CD8-positive, alpha-beta T cell (primary cell): ENCODE measurements at regions of chr19 and their contacts with region 1.

Region 1: GRCh38 chr19:39445265-39446111 is at the start of gene SUPT5H:
- DNase-seq: peak; percentile 94 to 100 (median 97)
- ATAC-seq: peak; percentile 93
- H3K4me3 ChIP-seq: peak within 1 kb of the TSS; percentile 85 to 95
- H3K4me3 Mint-ChIP-seq: peak within 1 kb of the TSS; percentile 93
- H3K27ac ChIP-seq: peak within 1 kb of the TSS; percentile 94 to 95
- H3K27ac Mint-ChIP-seq: peak within 1 kb of the TSS; percentile 99
- H3K4me1 ChIP-seq: peaks cover 42% of the 10 kb centered on the region
- H3K4me1 Mint-ChIP-seq: peaks cover 54% of the 10 kb centered on the region
- H3K27me3 ChIP-seq: no peaks in the 10 kb centered on the region
- H3K27me3 Mint-ChIP-seq: no peaks in the 10 kb centered on the region
- CTCF ChIP-seq: no peak
- total RNA-seq, gene SUPT5H: 303 to 329 TPM

Region 2: DNA sequence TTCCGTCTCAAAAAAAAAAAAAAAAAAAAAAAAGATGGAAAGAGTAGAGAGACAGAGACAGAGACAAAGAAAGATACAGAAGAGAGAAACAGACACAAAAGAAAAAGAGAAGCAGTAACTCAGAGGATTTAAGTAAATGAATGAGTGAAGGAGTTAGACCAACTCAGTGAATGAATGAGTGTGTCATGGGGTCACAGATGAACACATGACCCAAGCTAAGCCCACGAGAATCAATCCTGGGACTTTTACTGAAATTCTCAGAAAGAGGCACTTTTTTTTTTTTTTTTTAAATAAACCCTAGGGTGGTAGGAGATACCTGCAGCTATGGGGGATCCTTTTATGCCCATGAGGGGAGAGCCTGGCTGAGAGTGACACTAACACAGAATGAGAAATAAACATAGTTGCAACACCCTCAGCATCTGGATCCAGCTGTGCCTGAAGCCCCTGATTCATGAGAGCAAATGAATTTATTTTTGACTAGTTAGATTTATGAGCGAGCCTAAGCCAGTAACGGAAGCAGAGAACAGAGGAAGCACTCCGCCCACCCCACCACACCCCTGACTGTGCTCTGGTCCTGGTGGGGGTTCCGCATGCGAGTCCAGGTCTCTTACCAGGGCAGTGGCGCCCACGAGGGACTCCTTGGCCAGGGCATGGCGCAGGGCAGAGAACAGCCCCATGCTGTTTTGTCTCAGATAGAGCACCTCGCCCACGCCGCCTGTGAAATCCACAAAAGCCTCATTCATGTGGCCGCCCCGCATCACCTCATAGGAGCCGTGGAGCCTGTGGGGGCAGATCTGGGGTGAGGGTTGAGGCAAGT is 705.8 kb before region 1 on chr19:
- CTCF ChIA-PET with region 1: no interaction called
- POLR2A ChIA-PET with region 1: no interaction called
- intact Hi-C with region 1: no loop called
- DNase-seq: peak in 2 of 9 experiments; percentile 43 to 48
- ATAC-seq: no peak
- H3K4me3 ChIP-seq: no peak overlapping the region
- H3K4me3 Mint-ChIP-seq: no peak overlapping the region
- H3K27ac ChIP-seq: peak overlapping the region in 1 of 2 experiments; percentile 43
- H3K27ac Mint-ChIP-seq: no peak overlapping the region
- H3K4me1 ChIP-seq: peaks cover 34% of the 10 kb centered on the region
- H3K4me1 Mint-ChIP-seq: peaks cover 26% of the 10 kb centered on the region
- H3K27me3 ChIP-seq: no peaks in the 10 kb centered on the region
- H3K27me3 Mint-ChIP-seq: no peaks in the 10 kb centered on the region
- CTCF ChIP-seq: no peak

Region 3: DNA sequence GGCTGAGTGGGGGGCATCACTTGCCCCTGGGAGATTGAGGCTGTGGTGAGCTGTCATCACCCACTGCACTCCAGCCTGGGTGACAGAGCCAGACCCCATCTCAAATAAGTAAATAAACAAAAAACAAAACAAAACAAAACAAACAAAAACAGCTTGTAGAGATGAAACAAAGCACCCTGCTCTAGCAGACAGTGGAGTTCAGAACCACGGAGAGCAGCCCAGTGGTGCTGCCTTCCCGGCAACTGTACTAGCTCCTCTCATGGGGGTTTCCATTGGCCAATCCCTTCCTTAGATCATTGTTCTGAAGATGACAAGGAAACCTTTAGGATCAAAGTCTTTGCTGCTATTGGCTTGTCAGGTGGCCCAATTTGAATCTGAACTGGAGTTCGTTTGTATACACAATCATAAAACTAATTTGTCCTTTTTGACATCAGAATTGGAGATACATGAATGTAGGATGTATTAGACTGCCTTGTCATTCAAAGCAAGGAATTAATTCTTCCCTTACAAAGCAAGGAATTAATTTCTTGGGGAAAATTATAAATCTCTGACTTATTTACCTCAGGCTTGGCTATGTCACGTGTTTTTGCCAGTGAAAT is 221.7 kb before region 1 on chr19:
- CTCF ChIA-PET with region 1: no interaction called
- POLR2A ChIA-PET with region 1: no interaction called
- intact Hi-C with region 1: no loop called
- DNase-seq: peak in 2 of 9 experiments; percentile 21 to 32
- ATAC-seq: no peak
- H3K4me3 ChIP-seq: no peak overlapping the region
- H3K4me3 Mint-ChIP-seq: no peak overlapping the region
- H3K27ac ChIP-seq: no peak overlapping the region
- H3K27ac Mint-ChIP-seq: no peak overlapping the region
- H3K4me1 ChIP-seq: no peaks in the 10 kb centered on the region
- H3K4me1 Mint-ChIP-seq: peaks cover 3% of the 10 kb centered on the region
- H3K27me3 ChIP-seq: peaks cover 0 to 3% of the 10 kb centered on the region in 2 experiments
- H3K27me3 Mint-ChIP-seq: peaks cover 30% of the 10 kb centered on the region
- CTCF ChIP-seq: no peak

Region 4: GRCh38 chr19:39341719-39342604 is 103.5 kb before region 1 on chr19 and contains the start of gene SAMD4B:
- CTCF ChIA-PET with region 1: no interaction called
- POLR2A ChIA-PET with region 1: interaction called, 4 read pairs
- intact Hi-C with region 1: loop called (anchors 1 to 2 kb)
- DNase-seq: peak; percentile 98 to 100 (median 99)
- ATAC-seq: peak; percentile 90
- H3K4me3 ChIP-seq: peak within 1 kb of the TSS; percentile 93 to 97
- H3K4me3 Mint-ChIP-seq: peak within 1 kb of the TSS; percentile 100
- H3K27ac ChIP-seq: peak within 1 kb of the TSS; percentile 67 to 88
- H3K27ac Mint-ChIP-seq: peak within 1 kb of the TSS; percentile 98
- H3K4me1 ChIP-seq: peaks cover 29% of the 10 kb centered on the region
- H3K4me1 Mint-ChIP-seq: peaks cover 69% of the 10 kb centered on the region
- H3K27me3 ChIP-seq: no peaks in the 10 kb centered on the region
- H3K27me3 Mint-ChIP-seq: no peaks in the 10 kb centered on the region
- CTCF ChIP-seq: peak; percentile 73
- total RNA-seq, gene SAMD4B: 68.3 to 78.1 TPM

Region 5: DNA sequence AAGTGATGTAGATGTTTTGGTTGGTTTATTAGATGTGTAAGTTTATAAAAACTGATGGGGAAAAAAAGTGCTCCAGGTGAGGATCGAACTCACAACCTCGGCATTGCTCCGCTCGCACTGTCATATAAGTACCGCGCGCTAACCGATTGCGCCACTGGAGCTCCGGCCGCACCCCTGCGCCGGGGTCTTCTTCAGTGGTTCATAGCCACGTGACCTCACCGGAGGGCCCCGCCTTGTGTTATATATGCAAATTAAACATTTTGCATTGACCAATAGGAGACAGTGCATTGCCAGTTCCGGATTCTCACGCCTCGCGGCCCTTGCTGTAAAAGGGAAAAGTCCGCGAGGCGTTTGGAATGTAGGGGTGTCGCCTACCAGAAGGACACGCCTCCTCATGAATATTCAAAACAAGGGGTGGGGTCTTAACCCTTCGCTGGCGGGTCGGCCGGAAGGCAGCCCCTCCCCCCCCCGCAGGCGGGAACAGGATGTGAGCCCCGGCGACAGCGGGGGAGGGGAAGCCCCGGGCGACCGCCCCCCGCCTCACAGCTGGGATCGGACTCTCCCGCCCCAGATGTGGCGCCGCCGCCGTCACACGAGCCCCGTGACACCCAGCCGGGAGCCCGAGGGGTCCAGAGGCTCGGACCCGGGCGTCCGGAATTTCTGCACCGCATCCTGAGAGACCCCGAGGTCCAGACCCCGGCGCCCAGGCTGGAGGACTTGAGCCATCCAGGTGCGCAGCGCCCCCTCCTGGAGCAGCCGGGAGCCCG is 33.2 kb before region 1 on chr19 and contains the start of gene PLEKHG2:
- CTCF ChIA-PET with region 1: interaction called, 3 read pairs
- POLR2A ChIA-PET with region 1: interaction called, 9 read pairs
- intact Hi-C with region 1: loop called (anchors 1 kb)
- DNase-seq: peak; percentile 95 to 99 (median 97)
- ATAC-seq: peak; percentile 57
- H3K4me3 ChIP-seq: peak within 1 kb of the TSS; percentile 95
- H3K4me3 Mint-ChIP-seq: peak within 1 kb of the TSS; percentile 89
- H3K27ac ChIP-seq: peak within 1 kb of the TSS; percentile 94 to 100
- H3K27ac Mint-ChIP-seq: peak within 1 kb of the TSS; percentile 96
- H3K4me1 ChIP-seq: peaks cover 26% of the 10 kb centered on the region
- H3K4me1 Mint-ChIP-seq: peaks cover 33% of the 10 kb centered on the region
- H3K27me3 ChIP-seq: no peaks in the 10 kb centered on the region
- H3K27me3 Mint-ChIP-seq: no peaks in the 10 kb centered on the region
- CTCF ChIP-seq: peak; percentile 84
- total RNA-seq, gene PLEKHG2: 54.8 to 69.0 TPM

Region 6: DNA sequence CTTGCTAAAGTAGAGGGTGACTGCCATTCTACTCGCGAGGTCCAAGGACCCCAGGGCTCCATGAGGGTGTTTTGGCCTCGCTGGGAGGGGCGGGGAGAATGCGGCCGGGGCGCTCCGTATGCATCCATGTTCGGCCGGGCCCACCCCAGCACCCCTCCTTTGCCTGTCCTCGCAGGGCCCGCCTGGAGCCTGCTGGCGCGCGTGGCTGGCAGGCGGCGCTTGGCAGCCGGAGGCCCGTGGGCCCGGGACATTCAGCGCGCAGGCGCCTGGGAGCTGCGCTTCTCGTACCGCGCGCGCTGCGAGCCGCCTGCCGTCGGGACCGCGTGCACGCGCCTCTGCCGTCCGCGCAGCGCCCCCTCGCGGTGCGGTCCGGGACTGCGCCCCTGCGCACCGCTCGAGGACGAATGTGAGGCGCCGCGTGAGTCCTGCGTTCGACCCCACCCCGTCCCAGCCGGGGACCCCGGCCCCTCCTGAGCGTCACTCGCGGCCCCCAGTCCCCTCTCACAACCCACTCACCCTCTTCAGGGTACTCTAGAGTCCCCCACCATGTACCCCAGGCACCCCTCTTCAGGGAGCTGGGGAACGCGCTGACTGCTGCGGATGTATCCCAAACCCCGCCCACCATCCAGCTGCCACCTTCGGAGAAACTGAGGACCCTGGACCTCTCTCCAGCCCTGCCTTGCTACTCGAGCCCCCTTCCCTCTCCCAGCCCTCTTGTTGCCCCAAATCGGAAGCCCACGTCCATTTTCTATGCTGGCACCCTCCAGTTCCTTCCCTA is 57.3 kb after region 1 on chr19:
- CTCF ChIA-PET with region 1: interaction called, 3 read pairs
- POLR2A ChIA-PET with region 1: no interaction called
- intact Hi-C with region 1: loop called in 1 of 2 experiments (anchors 2 kb)
- DNase-seq: peak; percentile 51 to 91 (median 78)
- ATAC-seq: peak; percentile 79
- H3K4me3 ChIP-seq: no peak overlapping the region
- H3K4me3 Mint-ChIP-seq: no peak overlapping the region
- H3K27ac ChIP-seq: no peak overlapping the region
- H3K27ac Mint-ChIP-seq: no peak overlapping the region
- H3K4me1 ChIP-seq: peaks cover 27% of the 10 kb centered on the region
- H3K4me1 Mint-ChIP-seq: peaks cover 26% of the 10 kb centered on the region
- H3K27me3 ChIP-seq: peaks cover 23 to 50% of the 10 kb centered on the region in 2 experiments
- H3K27me3 Mint-ChIP-seq: peaks cover 57% of the 10 kb centered on the region
- CTCF ChIP-seq: peak; percentile 89

Region 7: DNA sequence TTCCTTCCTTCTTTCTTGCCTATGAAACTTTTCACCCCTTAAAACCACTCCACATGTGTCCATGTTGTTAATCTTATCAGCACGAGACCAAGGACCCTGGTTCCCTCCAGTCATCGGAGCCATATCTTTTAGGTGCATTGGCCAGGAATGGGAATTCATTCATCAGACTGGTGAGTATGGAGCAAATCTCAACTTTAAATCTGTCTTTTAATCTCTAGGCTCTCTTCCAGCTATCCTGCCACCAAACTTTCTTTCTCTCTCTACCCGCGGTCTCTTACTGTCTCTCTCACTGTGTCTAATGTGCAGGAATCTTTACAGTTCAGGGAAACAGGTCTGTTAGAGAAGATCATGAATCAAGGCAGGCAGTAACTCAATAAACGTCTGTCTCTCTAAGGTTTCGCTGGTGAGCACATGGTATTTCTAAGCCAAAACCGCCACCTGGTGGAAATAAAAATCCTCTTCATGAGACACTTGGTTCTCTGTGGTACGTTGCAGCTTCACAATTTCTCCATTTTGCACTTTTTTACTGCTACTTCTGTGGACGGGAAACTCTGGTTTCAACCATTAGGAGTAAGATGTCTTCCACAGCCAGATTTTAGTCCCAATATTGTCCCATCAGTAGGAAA is 226.4 kb after region 1 on chr19:
- CTCF ChIA-PET with region 1: interaction called, 7 read pairs
- POLR2A ChIA-PET with region 1: interaction called, 3 read pairs
- intact Hi-C with region 1: loop called in 1 of 2 experiments (anchors 2 kb)
- DNase-seq: peak in 7 of 9 experiments; percentile 19 to 74 (median 46)
- ATAC-seq: peak; percentile 78
- H3K4me3 ChIP-seq: no peak overlapping the region
- H3K4me3 Mint-ChIP-seq: no peak overlapping the region
- H3K27ac ChIP-seq: no peak overlapping the region
- H3K27ac Mint-ChIP-seq: no peak overlapping the region
- H3K4me1 ChIP-seq: peaks cover 12% of the 10 kb centered on the region
- H3K4me1 Mint-ChIP-seq: peaks cover 7% of the 10 kb centered on the region
- H3K27me3 ChIP-seq: no peaks in the 10 kb centered on the region
- H3K27me3 Mint-ChIP-seq: peaks cover 13% of the 10 kb centered on the region
- CTCF ChIP-seq: peak; percentile 66

Region 8: GRCh38 chr19:39846176-39846677 is 400.7 kb after region 1 on chr19 and contains the start of gene FBL:
- CTCF ChIA-PET with region 1: no interaction called
- POLR2A ChIA-PET with region 1: no interaction called
- intact Hi-C with region 1: loop called in 1 of 2 experiments (anchors 5 kb)
- DNase-seq: peak; percentile 94 to 99 (median 98)
- ATAC-seq: peak; percentile 94
- H3K4me3 ChIP-seq: peak within 1 kb of the TSS; percentile 86 to 87
- H3K4me3 Mint-ChIP-seq: peak within 1 kb of the TSS; percentile 87
- H3K27ac ChIP-seq: peak within 1 kb of the TSS; percentile 71 to 84
- H3K27ac Mint-ChIP-seq: peak within 1 kb of the TSS; percentile 96
- H3K4me1 ChIP-seq: peaks cover 39% of the 10 kb centered on the region
- H3K4me1 Mint-ChIP-seq: peaks cover 48% of the 10 kb centered on the region
- H3K27me3 ChIP-seq: no peaks in the 10 kb centered on the region
- H3K27me3 Mint-ChIP-seq: no peaks in the 10 kb centered on the region
- CTCF ChIP-seq: no peak
- total RNA-seq, gene FBL: 351 to 365 TPM

Region 9: GRCh38 chr19:39889872-39890545 is 444.5 kb after region 1 on chr19:
- CTCF ChIA-PET with region 1: no interaction called
- POLR2A ChIA-PET with region 1: no interaction called
- intact Hi-C with region 1: no loop called
- DNase-seq: peak in 1 of 9 experiments; percentile 12
- ATAC-seq: no peak
- H3K4me3 ChIP-seq: no peak overlapping the region
- H3K4me3 Mint-ChIP-seq: no peak overlapping the region
- H3K27ac ChIP-seq: no peak overlapping the region
- H3K27ac Mint-ChIP-seq: no peak overlapping the region
- H3K4me1 ChIP-seq: no peaks in the 10 kb centered on the region
- H3K4me1 Mint-ChIP-seq: peaks cover 11% of the 10 kb centered on the region
- H3K27me3 ChIP-seq: no peaks in the 10 kb centered on the region
- H3K27me3 Mint-ChIP-seq: no peaks in the 10 kb centered on the region
- CTCF ChIP-seq: no peak